GM12878 (cell line): ENCODE measurements at regions of chr5 and their contacts with region 1.

Region 1: DNA sequence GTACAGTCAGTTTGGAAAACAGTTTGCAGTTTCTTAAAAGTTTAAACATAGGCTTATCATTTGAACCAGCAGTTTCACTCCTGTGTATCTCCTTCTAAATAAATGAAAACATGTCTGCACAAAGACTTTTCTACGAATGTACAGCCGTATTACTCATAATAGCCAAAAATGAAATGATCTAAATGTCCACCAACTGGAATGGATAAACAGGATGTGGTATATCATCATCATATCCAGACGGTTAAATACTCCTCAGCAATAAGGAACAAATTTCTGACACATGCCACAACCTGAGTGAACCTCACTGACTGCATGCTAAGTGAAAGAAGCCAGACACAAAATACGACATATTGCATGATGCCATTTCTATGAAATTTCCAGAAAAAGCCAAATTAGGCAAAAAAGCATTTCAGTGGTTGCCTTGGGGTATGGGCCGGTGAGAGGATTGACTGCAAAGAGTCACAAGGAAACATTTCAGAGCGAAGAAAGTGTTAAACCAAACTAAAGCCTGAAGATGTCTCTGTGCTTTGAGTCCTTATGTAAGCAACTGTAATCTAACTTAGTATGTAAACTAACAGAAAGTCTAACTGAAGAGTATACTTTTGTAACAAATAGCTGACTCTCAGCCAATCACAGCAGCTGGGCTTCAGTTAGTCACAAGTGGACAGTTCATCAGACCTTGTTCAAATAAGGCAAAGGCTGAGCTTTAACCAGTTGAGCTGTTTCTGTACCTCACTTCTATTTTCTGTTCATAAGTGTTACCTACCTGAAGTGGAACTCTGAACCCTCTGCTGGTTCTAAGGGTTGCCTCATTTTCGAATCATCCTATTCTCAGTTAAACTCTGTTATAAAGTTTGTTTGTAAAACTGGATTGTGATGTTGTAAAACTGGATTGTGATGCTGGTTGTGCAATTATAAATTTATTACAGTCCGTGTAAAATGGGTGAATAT is 65.2 kb downstream of the TRIO start:
- DNase-seq: peak; percentile 86
- ATAC-seq: peak; percentile 75
- H3K4me3 ChIP-seq: peak overlapping the region; percentile 61
- H3K27ac ChIP-seq: peak overlapping the region; percentile 94
- H3K4me1 ChIP-seq: peaks cover 62% of the 10 kb centered on the region
- H3K27me3 ChIP-seq: no peaks in the 10 kb centered on the region
- CTCF ChIP-seq: peak in 2 of 3 experiments; percentile 39 to 42; a peak in 4 of 6 replicates
- EP300 ChIP-seq: peak; percentile 21 to 41; a peak in 2 of 4 replicates
- POLR2A ChIP-seq: no peak
- RAD21 ChIP-seq: peak; percentile 72

Region 2: GRCh38 chr5:13994621-13995253 is 213.6 kb before region 1 on chr5:
- CTCF ChIA-PET with region 1: interaction called, 4 read pairs
- POLR2A ChIA-PET with region 1: no interaction called
- RAD21 ChIA-PET with region 1: interaction called, 3 read pairs
- SMC1A ChIA-PET with region 1: interaction called, 3 read pairs
- in situ Hi-C with region 1: no loop called
- intact Hi-C with region 1: loop called (anchors 5 kb)
- DNase-seq: no peak
- ATAC-seq: peak; percentile 42; the same call in 2 of the 3 replicates
- H3K4me3 ChIP-seq: no peak overlapping the region
- H3K27ac ChIP-seq: no peak overlapping the region
- H3K4me1 ChIP-seq: no peaks in the 10 kb centered on the region
- H3K27me3 ChIP-seq: peaks cover 0 to 4% of the 10 kb centered on the region in 2 experiments; a peak in 1 of 4 replicates
- CTCF ChIP-seq: no peak
- EP300 ChIP-seq: no peak
- POLR2A ChIP-seq: no peak
- RAD21 ChIP-seq: no peak

Region 3: DNA sequence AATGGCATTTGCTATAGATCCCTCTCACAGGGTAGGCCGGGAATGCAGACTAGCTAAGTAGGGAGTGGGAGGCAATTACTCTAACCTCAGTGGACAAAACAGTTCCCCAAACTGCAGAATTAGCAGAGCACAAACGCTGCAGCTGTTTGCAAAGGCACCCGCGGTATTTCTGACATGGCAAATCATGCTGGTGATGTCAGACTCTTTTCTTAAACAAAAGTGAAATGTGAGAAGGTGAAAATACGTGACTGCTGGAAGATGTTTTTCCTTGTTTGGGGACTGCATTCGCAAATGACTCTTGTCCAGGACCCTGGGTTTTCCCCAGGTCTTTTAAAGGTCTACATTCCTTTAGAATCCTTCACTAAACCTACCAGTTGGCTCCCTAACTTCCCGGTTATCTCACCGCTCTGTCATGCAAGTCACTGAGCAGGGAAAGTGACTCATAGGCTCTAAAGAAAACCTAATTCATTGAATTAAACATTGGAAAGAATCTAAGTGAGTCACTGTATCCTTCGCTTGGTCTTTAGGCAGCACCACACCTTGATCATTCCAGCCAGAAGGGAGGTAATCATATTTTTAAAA is 172.4 kb before region 1 on chr5:
- CTCF ChIA-PET with region 1: no interaction called
- POLR2A ChIA-PET with region 1: no interaction called
- RAD21 ChIA-PET with region 1: no interaction called
- SMC1A ChIA-PET with region 1: no interaction called
- in situ Hi-C with region 1: no loop called
- intact Hi-C with region 1: no loop called
- DNase-seq: no peak
- ATAC-seq: peak; percentile 59
- H3K4me3 ChIP-seq: no peak overlapping the region
- H3K27ac ChIP-seq: no peak overlapping the region
- H3K4me1 ChIP-seq: no peaks in the 10 kb centered on the region
- H3K27me3 ChIP-seq: peaks cover 0 to 4% of the 10 kb centered on the region in 2 experiments; a peak in 2 of 4 replicates
- CTCF ChIP-seq: no peak
- EP300 ChIP-seq: peak in 1 of 2 experiments; percentile 25; a peak in 1 of 4 replicates
- POLR2A ChIP-seq: no peak
- RAD21 ChIP-seq: no peak

Region 4: GRCh38 chr5:14142827-14143548 is 65.4 kb before region 1 on chr5 and contains the start of gene TRIO:
- CTCF ChIA-PET with region 1: interaction called, 18 read pairs
- POLR2A ChIA-PET with region 1: interaction called, 347 read pairs
- RAD21 ChIA-PET with region 1: interaction called, 373 read pairs
- SMC1A ChIA-PET with region 1: interaction called, 225 read pairs
- in situ Hi-C with region 1: no loop called
- intact Hi-C with region 1: loop called (anchors 1 kb)
- DNase-seq: no peak
- ATAC-seq: peak; percentile 63
- H3K4me3 ChIP-seq: peak within 1 kb of the TSS; percentile 100
- H3K27ac ChIP-seq: peak within 1 kb of the TSS; percentile 70
- H3K4me1 ChIP-seq: peaks cover 14% of the 10 kb centered on the region
- H3K27me3 ChIP-seq: no peaks in the 10 kb centered on the region
- CTCF ChIP-seq: peak; percentile 44 to 56 (median 53); a peak in 5 of 6 replicates
- EP300 ChIP-seq: no peak
- POLR2A ChIP-seq: peak; percentile 73
- RAD21 ChIP-seq: 0 out of 2 replicates have a peak, but pooled peaks have one; percentile 11
- polyA plus RNA-seq, gene TRIO: 5.1 to 5.8 TPM

Region 5: GRCh38 chr5:14168144-14168792 is 40.1 kb before region 1 on chr5:
- CTCF ChIA-PET with region 1: interaction called, 9 read pairs
- POLR2A ChIA-PET with region 1: interaction called, 37 read pairs
- RAD21 ChIA-PET with region 1: interaction called, 82 read pairs
- SMC1A ChIA-PET with region 1: interaction called, 182 read pairs
- in situ Hi-C with region 1: no loop called
- intact Hi-C with region 1: no loop called
- DNase-seq: no peak
- ATAC-seq: peak; percentile 63
- H3K4me3 ChIP-seq: peak overlapping the region; percentile 50
- H3K27ac ChIP-seq: peak overlapping the region; percentile 91
- H3K4me1 ChIP-seq: peaks cover 41% of the 10 kb centered on the region
- H3K27me3 ChIP-seq: no peaks in the 10 kb centered on the region
- CTCF ChIP-seq: no peak
- EP300 ChIP-seq: no peak
- POLR2A ChIP-seq: peak; percentile 14; the same call in 1 of the 2 replicates
- RAD21 ChIP-seq: no peak

Region 6: GRCh38 chr5:14250084-14250695 is 41.8 kb after region 1 on chr5:
- CTCF ChIA-PET with region 1: interaction called, 5 read pairs
- POLR2A ChIA-PET with region 1: interaction called, 7 read pairs
- RAD21 ChIA-PET with region 1: interaction called, 17 read pairs
- SMC1A ChIA-PET with region 1: interaction called, 17 read pairs
- in situ Hi-C with region 1: no loop called
- intact Hi-C with region 1: no loop called
- DNase-seq: no peak
- ATAC-seq: peak; percentile 20
- H3K4me3 ChIP-seq: peak overlapping the region; percentile 34; the same call in 1 of the 2 replicates
- H3K27ac ChIP-seq: peak overlapping the region; percentile 79
- H3K4me1 ChIP-seq: peaks cover 44% of the 10 kb centered on the region
- H3K27me3 ChIP-seq: no peaks in the 10 kb centered on the region
- CTCF ChIP-seq: no peak
- EP300 ChIP-seq: no peak
- POLR2A ChIP-seq: no peak
- RAD21 ChIP-seq: no peak

Region 7: GRCh38 chr5:14270209-14270702 is 61.9 kb after region 1 on chr5:
- CTCF ChIA-PET with region 1: interaction called, 118 read pairs
- POLR2A ChIA-PET with region 1: interaction called, 10 read pairs
- RAD21 ChIA-PET with region 1: interaction called, 72 read pairs
- SMC1A ChIA-PET with region 1: interaction called, 136 read pairs
- in situ Hi-C with region 1: no loop called
- intact Hi-C with region 1: no loop called
- DNase-seq: no peak
- ATAC-seq: peak; percentile 80
- H3K4me3 ChIP-seq: no peak overlapping the region
- H3K27ac ChIP-seq: peak overlapping the region; percentile 19; the same call in 1 of the 2 replicates
- H3K4me1 ChIP-seq: peaks cover 20% of the 10 kb centered on the region
- H3K27me3 ChIP-seq: no peaks in the 10 kb centered on the region
- CTCF ChIP-seq: peak; percentile 77 to 78 (median 78)
- EP300 ChIP-seq: no peak
- POLR2A ChIP-seq: no peak
- RAD21 ChIP-seq: peak; percentile 93